Activated naive CD4-positive, alpha-beta T cell treated with anti-CD3 and anti-CD28 coated beads for 36 hours (primary cell): ENCODE measurements at regions of chr9 and their contacts with region 1.

Region 1: GRCh38 chr9:7976167-7976755 is 176.7 kb upstream of the DMAC1 start:
- DNase-seq: peak; percentile 71
- H3K4me3 Mint-ChIP-seq: no peak overlapping the region
- H3K27ac Mint-ChIP-seq: peak overlapping the region; percentile 67
- H3K4me1 Mint-ChIP-seq: peaks cover 67% of the 10 kb centered on the region
- H3K27me3 Mint-ChIP-seq: no peaks in the 10 kb centered on the region

Region 2: DNA sequence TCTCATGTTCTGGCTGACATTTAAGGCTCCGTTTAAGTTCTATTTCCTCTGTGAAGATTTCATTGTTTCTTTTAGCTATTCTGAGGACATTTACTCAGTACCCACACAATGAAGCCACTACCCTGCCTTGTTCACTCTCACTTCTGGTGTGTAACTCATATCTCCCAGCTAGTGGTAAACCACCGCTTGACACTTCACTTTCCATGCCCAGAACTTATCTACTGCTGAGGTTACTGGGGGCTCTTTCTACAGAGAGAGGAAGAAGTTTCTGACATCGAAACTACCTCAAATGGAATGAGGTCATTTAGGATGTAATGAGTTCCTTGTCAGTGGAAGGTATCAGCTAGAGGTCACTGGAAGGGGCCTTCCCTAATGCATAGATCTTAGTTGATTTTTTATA is 678.1 kb before region 1 on chr9:
- CTCF ChIA-PET with region 1: no interaction called
- intact Hi-C with region 1: loop called (anchors 5 kb)
- DNase-seq: peak; percentile 56
- H3K4me3 Mint-ChIP-seq: no peak overlapping the region
- H3K27ac Mint-ChIP-seq: no peak overlapping the region
- H3K4me1 Mint-ChIP-seq: peaks cover 13% of the 10 kb centered on the region
- H3K27me3 Mint-ChIP-seq: peaks cover 7% of the 10 kb centered on the region

Region 3: DNA sequence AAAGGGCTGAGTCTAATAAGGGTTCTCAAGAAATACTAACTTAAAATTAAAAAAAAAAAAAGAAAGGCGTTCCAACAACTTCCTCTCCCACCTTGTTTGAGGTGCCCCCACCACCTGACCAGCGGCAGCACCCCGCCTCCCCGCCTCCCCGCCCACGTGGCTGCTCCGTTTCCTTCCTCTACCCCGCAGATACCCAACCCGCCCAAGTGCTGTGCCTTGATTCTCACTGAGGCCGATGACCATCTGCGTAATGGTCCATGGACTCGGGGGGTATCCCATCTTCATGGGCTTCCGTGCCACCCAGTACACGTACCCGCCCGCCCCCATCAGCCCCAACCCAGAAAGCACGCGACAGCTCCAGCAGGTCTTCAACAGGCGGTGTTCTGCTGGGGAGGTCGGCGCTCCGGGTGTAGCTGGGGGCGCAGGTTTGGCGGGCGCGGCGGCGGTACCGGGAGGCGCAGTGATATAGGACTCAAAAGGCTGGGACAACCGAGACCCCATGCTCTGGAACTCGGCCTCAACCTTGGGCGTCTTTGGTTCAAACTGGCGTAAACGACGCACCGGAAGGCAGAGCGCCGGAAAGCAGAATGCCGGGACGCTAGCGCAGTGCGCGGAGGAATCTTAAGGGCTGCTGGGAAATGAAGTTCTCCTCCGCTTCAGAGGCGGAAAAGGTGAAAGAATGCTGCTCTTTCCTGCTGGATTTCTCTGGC is 176.9 kb before region 1 on chr9 and contains the start of gene DMAC1:
- CTCF ChIA-PET with region 1: no interaction called
- intact Hi-C with region 1: loop called (anchors 1 kb)
- DNase-seq: peak; percentile 82
- H3K4me3 Mint-ChIP-seq: peak within 1 kb of the TSS; percentile 91
- H3K27ac Mint-ChIP-seq: peak within 1 kb of the TSS; percentile 94
- H3K4me1 Mint-ChIP-seq: peaks cover 28% of the 10 kb centered on the region
- H3K27me3 Mint-ChIP-seq: no peaks in the 10 kb centered on the region
- total RNA-seq, gene DMAC1: 51.1 to 52.1 TPM

Region 4: DNA sequence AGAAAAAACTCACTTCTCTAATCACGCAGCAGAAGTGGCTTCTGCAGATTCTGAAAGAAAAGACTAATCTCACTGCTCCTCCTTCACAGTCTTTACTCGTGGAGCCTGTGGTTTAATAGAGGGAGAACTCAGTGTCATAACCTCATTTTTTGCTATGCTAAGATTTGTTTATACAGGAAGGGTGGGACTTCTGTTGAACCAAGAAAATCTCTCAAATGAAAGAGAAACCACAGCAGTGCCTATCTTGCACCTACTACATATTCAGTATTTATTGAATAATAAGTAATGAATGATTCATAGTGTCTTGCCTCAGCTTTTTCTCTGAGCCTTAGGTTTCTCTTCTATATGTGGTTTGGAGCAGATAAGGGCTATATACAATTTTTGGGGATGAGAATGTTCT is 40.6 kb before region 1 on chr9:
- CTCF ChIA-PET with region 1: interaction called, 3 read pairs
- intact Hi-C with region 1: loop called (anchors 1 kb)
- DNase-seq: no peak
- H3K4me3 Mint-ChIP-seq: peak overlapping the region; percentile 31
- H3K27ac Mint-ChIP-seq: peak overlapping the region; percentile 68
- H3K4me1 Mint-ChIP-seq: peaks cover 24% of the 10 kb centered on the region
- H3K27me3 Mint-ChIP-seq: no peaks in the 10 kb centered on the region

Region 5: DNA sequence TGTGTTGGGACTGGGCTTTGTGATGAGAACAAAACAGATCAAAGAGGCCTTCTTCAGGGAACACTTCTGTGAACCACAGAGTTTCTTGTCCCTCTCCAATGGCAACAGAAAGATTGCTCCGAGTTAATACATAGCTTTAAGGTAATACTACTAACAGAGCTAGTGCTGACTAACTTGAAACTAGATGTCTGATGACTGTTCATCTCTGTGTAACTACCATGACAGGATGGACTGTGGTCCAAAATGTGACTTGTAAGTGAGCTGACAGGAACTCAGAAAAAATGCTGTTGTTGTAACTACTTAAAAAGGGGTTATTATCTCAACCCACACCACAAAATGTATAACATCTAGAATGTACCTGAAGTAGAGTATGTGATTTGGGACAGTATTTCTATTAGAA is 453.5 kb after region 1 on chr9:
- CTCF ChIA-PET with region 1: no interaction called
- intact Hi-C with region 1: loop called (anchors 2 kb)
- DNase-seq: no peak
- H3K4me3 Mint-ChIP-seq: no peak overlapping the region
- H3K27ac Mint-ChIP-seq: no peak overlapping the region
- H3K4me1 Mint-ChIP-seq: peaks cover 22% of the 10 kb centered on the region
- H3K27me3 Mint-ChIP-seq: peaks cover under 1% of the 10 kb centered on the region